ENCODE measurements at regions of chr12 and their contacts with region 1.

Region 1: DNA sequence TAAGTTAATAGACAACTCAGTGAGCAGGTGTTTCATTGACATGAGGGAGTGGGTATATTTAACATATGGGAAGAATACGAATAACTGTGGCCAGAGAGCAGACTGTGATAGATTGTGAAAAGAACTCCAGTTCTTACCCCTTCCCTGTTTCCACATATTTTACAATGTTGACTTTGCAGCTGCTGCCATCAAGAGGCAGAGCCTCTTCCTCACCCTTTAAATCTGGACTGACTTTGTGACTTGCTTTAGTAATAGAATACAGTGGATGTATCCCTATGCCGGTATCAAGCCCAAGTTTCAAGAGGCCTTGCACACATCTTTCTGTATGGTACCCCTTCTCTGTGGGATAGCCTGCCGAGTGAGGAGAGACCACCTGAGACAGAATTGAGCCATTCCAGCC is 356.7 kb downstream of the ETNK1 start:
- DNase-seq: peak in 1 of 4 experiments; percentile 4
- ATAC-seq: no peak; the same call in 2 of the 3 replicates
- H3K4me3 ChIP-seq: no peak overlapping the region
- H3K27ac ChIP-seq: no peak overlapping the region
- H3K4me1 ChIP-seq: no peaks in the 10 kb centered on the region
- H3K27me3 ChIP-seq: peaks cover 4 to 17% of the 10 kb centered on the region in 2 experiments
- CTCF ChIP-seq: peak in 2 of 3 experiments; percentile 10 to 19; a peak in 1 of 6 replicates
- EP300 ChIP-seq: no peak
- POLR2A ChIP-seq: no peak
- RAD21 ChIP-seq: peak in 1 of 2 experiments; percentile 44; a peak in 2 of 4 replicates

Region 2: GRCh38 chr12:22856178-22856577 is 125.5 kb before region 1 on chr12:
- CTCF ChIA-PET with region 1: no interaction called
- POLR2A ChIA-PET with region 1: no interaction called
- in situ Hi-C with region 1: no loop called
- intact Hi-C with region 1: loop called (anchors 5 kb)
- DNase-seq: peak; percentile 12 to 30 (median 15)
- ATAC-seq: no peak
- H3K4me3 ChIP-seq: no peak overlapping the region
- H3K27ac ChIP-seq: no peak overlapping the region
- H3K4me1 ChIP-seq: no peaks in the 10 kb centered on the region
- H3K27me3 ChIP-seq: no peaks in the 10 kb centered on the region
- CTCF ChIP-seq: peak; percentile 33 to 72 (median 35); a peak in 4 of 6 replicates
- EP300 ChIP-seq: no peak
- POLR2A ChIP-seq: no peak
- RAD21 ChIP-seq: peak; percentile 79 to 88

Measured in K562 (cell line).